CD4-positive, alpha-beta T cell (primary cell): ENCODE measurements at regions of chr19 and their contacts with region 1.

Region 1: DNA sequence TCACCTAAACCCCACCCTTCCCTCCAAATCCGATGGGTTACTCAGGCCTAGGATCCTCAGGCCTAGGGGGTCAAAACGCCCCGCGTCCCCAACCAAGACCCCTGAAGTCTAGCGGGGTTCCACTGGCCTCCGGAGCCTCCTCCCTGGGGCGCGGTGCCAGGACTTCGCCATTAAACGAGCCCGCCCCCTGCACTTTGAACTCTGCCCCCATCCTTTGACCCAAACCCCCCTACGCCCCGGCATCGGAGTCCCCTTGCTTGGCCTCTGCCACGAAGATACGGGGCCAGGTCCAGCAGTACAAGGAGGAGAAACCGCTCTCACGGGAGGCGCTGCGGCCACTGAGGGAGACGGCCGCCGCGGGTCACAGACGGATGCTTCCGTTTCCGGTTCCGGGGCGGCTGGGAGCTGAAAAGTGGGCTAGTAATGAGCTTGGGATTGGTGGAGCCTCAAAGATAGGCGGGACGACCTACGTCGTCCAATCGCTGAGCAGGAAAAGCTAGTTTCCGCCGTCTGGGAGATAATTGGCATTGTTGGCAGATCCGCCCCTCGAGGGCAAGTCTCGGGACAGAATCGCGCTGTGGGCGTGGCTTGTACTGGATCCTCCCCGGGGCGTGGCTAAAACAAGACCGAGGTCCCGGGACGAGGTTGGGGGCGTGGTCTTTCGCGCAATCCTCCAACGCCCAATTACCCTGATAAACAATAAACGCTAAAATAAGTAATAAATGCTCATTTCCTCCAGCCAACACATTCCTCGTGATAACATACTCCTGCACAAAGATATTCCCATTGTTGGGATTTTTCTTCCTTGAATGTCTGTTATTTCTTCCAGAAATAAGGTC is 5.7 kb upstream of the ZNF77 start:
- DNase-seq: peak; percentile 100
- ATAC-seq: peak; percentile 95
- H3K4me3 ChIP-seq: peak overlapping the region; percentile 82
- H3K4me3 Mint-ChIP-seq: peak overlapping the region; percentile 95
- H3K27ac ChIP-seq: peak overlapping the region; percentile 97 to 98
- H3K27ac Mint-ChIP-seq: peak overlapping the region; percentile 96
- H3K4me1 ChIP-seq: peaks cover 16% of the 10 kb centered on the region
- H3K4me1 Mint-ChIP-seq: peaks cover 25% of the 10 kb centered on the region
- H3K27me3 ChIP-seq: no peaks in the 10 kb centered on the region
- H3K27me3 Mint-ChIP-seq: no peaks in the 10 kb centered on the region
- CTCF ChIP-seq: no peak

Region 2: GRCh38 chr19:1655131-1655981 is 1295.1 kb before region 1 on chr19:
- CTCF ChIA-PET with region 1: no interaction called
- POLR2A ChIA-PET with region 1: no interaction called
- intact Hi-C with region 1: no loop called
- DNase-seq: peak in 1 of 14 experiments; percentile 21
- ATAC-seq: no peak
- H3K4me3 ChIP-seq: no peak overlapping the region
- H3K4me3 Mint-ChIP-seq: no peak overlapping the region
- H3K27ac ChIP-seq: no peak overlapping the region
- H3K27ac Mint-ChIP-seq: no peak overlapping the region
- H3K4me1 ChIP-seq: peaks cover 20% of the 10 kb centered on the region
- H3K4me1 Mint-ChIP-seq: peaks cover 14% of the 10 kb centered on the region
- H3K27me3 ChIP-seq: no peaks in the 10 kb centered on the region
- H3K27me3 Mint-ChIP-seq: peaks cover 10% of the 10 kb centered on the region
- CTCF ChIP-seq: no peak

Region 3: DNA sequence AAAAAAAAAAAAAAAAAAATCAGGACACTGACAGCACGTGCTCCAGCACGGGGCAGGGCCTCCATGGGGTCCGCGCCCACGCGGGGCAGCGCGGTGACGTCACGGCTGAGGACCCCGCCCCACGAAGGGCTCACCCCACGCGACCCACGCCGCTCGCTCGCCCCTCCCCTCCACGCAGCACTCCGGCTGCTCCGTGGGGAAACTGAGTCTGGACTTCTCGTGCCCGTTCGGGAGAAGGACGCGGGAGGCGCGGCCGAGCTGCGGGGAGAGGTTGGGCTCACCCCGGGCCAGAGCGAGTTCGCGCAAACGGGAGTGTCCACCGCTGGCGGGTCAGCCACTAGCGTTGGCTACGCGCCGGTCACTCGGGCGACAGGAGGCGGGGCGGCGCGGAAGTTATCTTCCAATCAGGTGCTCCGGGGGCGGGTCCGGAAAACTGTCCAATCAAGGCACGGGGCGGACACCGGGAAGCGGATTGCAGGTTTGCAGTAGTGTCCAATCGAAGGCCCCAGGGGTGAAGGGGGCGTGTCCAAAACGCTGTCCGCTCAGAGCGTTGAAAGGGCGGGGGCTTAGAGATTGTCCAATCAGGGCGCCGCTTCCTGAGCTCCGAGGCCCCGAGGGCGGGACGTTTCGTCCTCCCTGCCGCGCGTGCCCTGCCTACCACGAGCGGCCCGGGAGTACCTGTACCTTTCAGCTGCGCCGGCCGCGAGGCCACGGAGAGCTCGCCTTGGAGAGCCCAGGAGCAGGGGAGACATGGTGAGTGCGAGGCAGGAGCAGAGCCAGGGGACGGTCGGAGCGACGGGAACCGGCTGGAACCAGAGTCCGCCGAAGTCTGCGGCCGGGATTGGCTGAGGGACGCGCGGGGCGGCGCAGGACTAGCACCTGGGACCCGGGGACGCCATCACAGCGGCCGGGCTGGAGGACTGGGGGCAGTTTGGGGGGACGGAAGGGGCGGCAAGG is 49.9 kb before region 1 on chr19 and contains the start of gene ZNF57:
- CTCF ChIA-PET with region 1: no interaction called
- POLR2A ChIA-PET with region 1: interaction called, 13 read pairs
- intact Hi-C with region 1: loop called in 1 of 2 experiments (anchors 2 kb)
- DNase-seq: peak; percentile 93 to 99 (median 97)
- ATAC-seq: peak; percentile 97
- H3K4me3 ChIP-seq: peak within 1 kb of the TSS; percentile 68
- H3K4me3 Mint-ChIP-seq: peak within 1 kb of the TSS; percentile 98
- H3K27ac ChIP-seq: no peak within 1 kb of the TSS
- H3K27ac Mint-ChIP-seq: peak within 1 kb of the TSS; percentile 70
- H3K4me1 ChIP-seq: peaks cover 20% of the 10 kb centered on the region
- H3K4me1 Mint-ChIP-seq: peaks cover 18% of the 10 kb centered on the region
- H3K27me3 ChIP-seq: no peaks in the 10 kb centered on the region
- H3K27me3 Mint-ChIP-seq: no peaks in the 10 kb centered on the region
- CTCF ChIP-seq: no peak
- total RNA-seq, gene ZNF57: 0.47 to 0.82 TPM

Region 4: DNA sequence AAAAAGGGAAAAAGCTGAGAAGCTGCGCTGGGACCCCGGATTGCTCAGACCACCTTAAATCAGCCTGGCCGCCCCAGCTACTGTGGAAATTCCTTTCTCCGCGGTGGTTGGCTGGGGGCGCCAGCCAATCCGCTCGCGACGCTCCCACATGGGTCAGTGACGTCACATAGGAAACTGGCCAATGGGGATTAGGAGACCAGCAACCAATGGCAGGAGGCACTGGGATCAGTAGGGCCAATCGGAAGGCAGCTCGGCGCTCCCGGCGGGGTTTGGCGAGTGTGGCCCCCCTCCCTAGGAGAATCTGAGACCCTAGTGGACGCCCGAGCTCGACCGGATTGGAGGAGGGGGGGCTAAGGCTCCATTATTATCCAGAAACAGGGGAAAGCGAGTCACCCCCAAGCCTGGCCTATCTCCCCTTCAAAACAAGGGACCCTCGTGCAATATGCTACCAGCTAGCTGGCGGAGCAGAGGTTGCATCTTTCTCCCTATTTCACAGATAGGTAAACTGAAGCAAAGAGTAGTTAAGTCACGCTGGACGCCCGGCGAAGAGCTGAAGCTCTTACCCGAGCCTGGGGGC is 85.1 kb after region 1 on chr19:
- CTCF ChIA-PET with region 1: interaction called, 14 read pairs
- POLR2A ChIA-PET with region 1: interaction called, 19 read pairs
- intact Hi-C with region 1: no loop called
- DNase-seq: peak; percentile 88 to 98 (median 92)
- ATAC-seq: peak; percentile 84
- H3K4me3 ChIP-seq: peak overlapping the region; percentile 70
- H3K4me3 Mint-ChIP-seq: peak overlapping the region; percentile 89
- H3K27ac ChIP-seq: peak overlapping the region; percentile 60 to 77
- H3K27ac Mint-ChIP-seq: peak overlapping the region; percentile 92
- H3K4me1 ChIP-seq: peaks cover 26% of the 10 kb centered on the region
- H3K4me1 Mint-ChIP-seq: peaks cover 37% of the 10 kb centered on the region
- H3K27me3 ChIP-seq: no peaks in the 10 kb centered on the region
- H3K27me3 Mint-ChIP-seq: no peaks in the 10 kb centered on the region
- CTCF ChIP-seq: no peak

Region 5: DNA sequence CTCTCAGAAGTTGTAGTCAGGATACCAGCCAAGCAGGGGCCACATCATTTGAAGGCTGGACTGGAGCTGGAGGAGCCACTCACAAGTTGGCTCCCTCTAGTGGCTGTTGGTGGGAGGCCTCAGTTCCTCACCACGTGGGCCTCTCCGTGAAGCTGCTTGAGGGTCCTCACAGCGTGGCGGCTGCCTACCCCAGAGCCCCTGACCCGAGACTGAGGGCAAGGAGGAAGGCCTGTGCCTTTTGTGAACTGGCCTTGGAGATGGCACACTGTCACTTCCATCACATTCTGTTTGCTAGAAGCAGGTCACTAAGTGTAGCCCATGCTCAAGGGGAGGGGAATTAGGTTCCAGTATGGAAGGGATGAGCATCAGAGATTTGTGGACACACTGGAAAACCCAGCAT is 158.3 kb after region 1 on chr19:
- CTCF ChIA-PET with region 1: interaction called, 26 read pairs
- POLR2A ChIA-PET with region 1: interaction called, 7 read pairs
- intact Hi-C with region 1: no loop called
- DNase-seq: peak; percentile 60 to 85 (median 67)
- ATAC-seq: peak; percentile 66
- H3K4me3 ChIP-seq: no peak overlapping the region
- H3K4me3 Mint-ChIP-seq: no peak overlapping the region
- H3K27ac ChIP-seq: no peak overlapping the region
- H3K27ac Mint-ChIP-seq: no peak overlapping the region
- H3K4me1 ChIP-seq: peaks cover 12% of the 10 kb centered on the region
- H3K4me1 Mint-ChIP-seq: peaks cover 10% of the 10 kb centered on the region
- H3K27me3 ChIP-seq: no peaks in the 10 kb centered on the region
- H3K27me3 Mint-ChIP-seq: peaks cover 3% of the 10 kb centered on the region
- CTCF ChIP-seq: peak; percentile 88

Region 6: GRCh38 chr19:3185482-3186376 is 235.2 kb after region 1 on chr19 and contains the start of gene NCLN:
- CTCF ChIA-PET with region 1: no interaction called
- POLR2A ChIA-PET with region 1: interaction called, 10 read pairs
- intact Hi-C with region 1: loop called (anchors 1 to 5 kb)
- DNase-seq: peak; percentile 88 to 96 (median 94)
- ATAC-seq: peak; percentile 82
- H3K4me3 ChIP-seq: peak within 1 kb of the TSS; percentile 59
- H3K4me3 Mint-ChIP-seq: peak within 1 kb of the TSS; percentile 93
- H3K27ac ChIP-seq: peak within 1 kb of the TSS; percentile 62
- H3K27ac Mint-ChIP-seq: peak within 1 kb of the TSS; percentile 86
- H3K4me1 ChIP-seq: peaks cover 92% of the 10 kb centered on the region
- H3K4me1 Mint-ChIP-seq: peaks cover 57% of the 10 kb centered on the region
- H3K27me3 ChIP-seq: no peaks in the 10 kb centered on the region
- H3K27me3 Mint-ChIP-seq: no peaks in the 10 kb centered on the region
- CTCF ChIP-seq: no peak
- total RNA-seq, gene NCLN: 49.6 to 51.9 TPM

Region 7: DNA sequence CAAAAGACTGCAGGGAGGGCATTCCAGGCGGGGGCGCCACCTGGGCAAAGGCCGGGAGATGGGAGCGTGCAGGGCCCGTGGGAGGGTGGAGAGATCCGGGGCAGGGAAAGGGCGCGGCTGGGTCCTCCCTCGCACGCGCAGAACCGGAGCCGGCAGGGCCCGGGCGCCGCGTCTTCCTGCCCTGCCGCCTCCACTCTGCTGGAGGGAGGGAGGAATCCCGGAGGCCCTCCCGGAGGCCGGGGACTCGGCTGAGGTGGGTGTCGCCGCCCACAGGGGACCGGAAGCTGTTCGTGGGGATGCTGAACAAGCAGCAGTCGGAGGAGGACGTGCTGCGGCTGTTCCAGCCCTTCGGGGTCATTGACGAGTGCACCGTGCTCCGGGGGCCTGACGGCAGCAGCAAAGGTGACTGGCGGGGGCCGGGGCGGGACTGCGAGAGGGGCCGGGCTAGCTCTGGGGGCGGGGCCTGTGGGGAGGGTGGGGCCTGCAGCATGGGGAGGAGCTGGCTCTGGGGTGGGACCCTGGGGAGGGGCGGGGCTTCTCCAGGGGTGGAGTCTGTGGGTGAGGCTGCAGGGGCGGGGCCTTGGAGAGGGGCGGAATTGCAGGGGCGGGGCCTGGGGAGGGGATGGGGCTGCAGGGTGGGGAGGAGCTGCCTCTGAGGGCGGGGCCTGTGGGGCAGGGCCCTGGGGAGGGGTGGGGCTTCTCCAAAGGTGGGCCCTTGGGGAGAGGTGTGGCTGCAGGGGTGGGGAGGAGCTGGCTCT is 325.3 kb after region 1 on chr19:
- CTCF ChIA-PET with region 1: no interaction called
- POLR2A ChIA-PET with region 1: interaction called, 4 read pairs
- intact Hi-C with region 1: loop called in 1 of 2 experiments (anchors 10 kb)
- DNase-seq: peak; percentile 87 to 97 (median 93)
- ATAC-seq: peak; percentile 76
- H3K4me3 ChIP-seq: peak overlapping the region; percentile 64
- H3K4me3 Mint-ChIP-seq: peak overlapping the region; percentile 83
- H3K27ac ChIP-seq: no peak overlapping the region
- H3K27ac Mint-ChIP-seq: peak overlapping the region; percentile 50
- H3K4me1 ChIP-seq: peaks cover 24% of the 10 kb centered on the region
- H3K4me1 Mint-ChIP-seq: peaks cover 17% of the 10 kb centered on the region
- H3K27me3 ChIP-seq: peaks cover 3 to 9% of the 10 kb centered on the region in 2 experiments
- H3K27me3 Mint-ChIP-seq: peaks cover 13% of the 10 kb centered on the region
- CTCF ChIP-seq: peak; percentile 53

Region 8: GRCh38 chr19:3434712-3435553 is 484.4 kb after region 1 on chr19:
- CTCF ChIA-PET with region 1: no interaction called
- POLR2A ChIA-PET with region 1: no interaction called
- intact Hi-C with region 1: loop called in 1 of 2 experiments (anchors 10 kb)
- DNase-seq: peak; percentile 88 to 97 (median 94)
- ATAC-seq: peak; percentile 94
- H3K4me3 ChIP-seq: peak overlapping the region; percentile 79
- H3K4me3 Mint-ChIP-seq: peak overlapping the region; percentile 97
- H3K27ac ChIP-seq: peak overlapping the region; percentile 92 to 94
- H3K27ac Mint-ChIP-seq: peak overlapping the region; percentile 95
- H3K4me1 ChIP-seq: peaks cover 17% of the 10 kb centered on the region
- H3K4me1 Mint-ChIP-seq: peaks cover 17% of the 10 kb centered on the region
- H3K27me3 ChIP-seq: no peaks in the 10 kb centered on the region
- H3K27me3 Mint-ChIP-seq: no peaks in the 10 kb centered on the region
- CTCF ChIP-seq: no peak